HCT116 (cell line): ENCODE measurements at regions of chr9 and their contacts with region 1.

Region 1: GRCh38 chr9:88173378-88173999 is 35.2 kb upstream of the SPATA31C2 start:
- DNase-seq: peak; percentile 81
- ATAC-seq: peak; percentile 91
- H3K4me3 ChIP-seq: no peak overlapping the region
- H3K27ac ChIP-seq: no peak overlapping the region
- H3K4me1 ChIP-seq: no peaks in the 10 kb centered on the region
- H3K27me3 ChIP-seq: no peaks in the 10 kb centered on the region
- CTCF ChIP-seq: peak; percentile 85 to 100 (median 92)
- POLR2A ChIP-seq: no peak
- RAD21 ChIP-seq: peak; percentile 93

Region 2: DNA sequence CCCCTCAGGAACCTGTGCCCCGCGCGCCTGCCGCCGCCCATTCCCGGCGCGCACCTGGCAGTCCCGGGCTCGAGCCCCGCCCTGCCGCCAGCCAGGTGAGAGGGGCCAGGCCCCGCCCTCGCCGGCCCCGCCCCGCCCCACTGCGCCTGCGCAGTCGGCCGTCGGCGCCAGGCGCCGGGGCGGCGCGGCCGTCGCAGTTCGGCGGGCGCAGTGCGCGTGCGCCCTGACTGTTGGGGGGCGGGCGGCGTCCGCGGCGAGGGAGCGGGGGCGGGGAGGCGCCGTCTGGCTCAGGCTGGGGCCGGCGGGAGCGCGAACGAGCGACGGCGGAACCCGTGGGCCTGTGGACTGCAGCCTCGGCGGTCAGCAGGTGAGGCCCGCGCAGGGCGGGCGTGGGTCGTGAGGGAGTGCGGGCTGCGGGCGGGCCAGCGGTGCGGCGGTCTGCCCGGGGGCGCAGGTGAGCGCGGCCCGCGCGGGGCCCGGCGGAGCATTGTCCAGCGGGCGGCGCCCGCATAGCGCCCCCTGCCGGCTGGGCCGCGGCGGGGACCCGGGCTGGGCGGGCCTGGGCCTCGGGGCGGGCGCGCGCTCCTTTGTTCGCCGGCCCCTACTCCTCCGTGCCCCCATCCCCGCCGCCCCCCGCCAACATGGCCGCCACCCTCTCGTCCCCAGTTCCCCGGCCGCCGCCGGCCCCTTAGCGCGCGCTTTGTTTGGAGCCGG is 214.8 kb after region 1 on chr9 and contains the start of gene SPIN1:
- CTCF ChIA-PET with region 1: no interaction called
- POLR2A ChIA-PET with region 1: no interaction called
- RAD21 ChIA-PET with region 1: no interaction called
- intact Hi-C with region 1: loop called (anchors 2 kb)
- DNase-seq: peak; percentile 55
- ATAC-seq: peak; percentile 87
- H3K4me3 ChIP-seq: peak within 1 kb of the TSS; percentile 69 to 93
- H3K27ac ChIP-seq: peak within 1 kb of the TSS; percentile 92
- H3K4me1 ChIP-seq: peaks cover 12 to 24% of the 10 kb centered on the region in 2 experiments
- H3K27me3 ChIP-seq: no peaks in the 10 kb centered on the region
- CTCF ChIP-seq: peak in 2 of 3 experiments; percentile 11 to 32; a peak in 1 of 6 replicates
- POLR2A ChIP-seq: no peak
- RAD21 ChIP-seq: peak; percentile 21; the same call in 1 of the 2 replicates
- total RNA-seq, gene SPIN1: 74.0 TPM